ENCODE measurements at regions of chr2 and their contacts with region 1.

Region 1: GRCh38 chr2:71748227-71748626 is 294.9 kb downstream of the DYSF start:
- DNase-seq: peak; percentile 72 to 86
- H3K4me3 ChIP-seq: peak overlapping the region; percentile 25; the same call in 1 of the 2 replicates
- H3K27ac ChIP-seq: peak overlapping the region; percentile 93
- H3K4me1 ChIP-seq: peaks cover 84% of the 10 kb centered on the region
- H3K27me3 ChIP-seq: no peaks in the 10 kb centered on the region
- CTCF ChIP-seq: no peak

Region 2: GRCh38 chr2:71716781-71717624 is 31.2 kb before region 1 on chr2:
- CTCF ChIA-PET with region 1: no interaction called
- POLR2A ChIA-PET with region 1: no interaction called
- intact Hi-C with region 1: loop called (anchors 1 kb)
- DNase-seq: peak; percentile 71 to 95
- H3K4me3 ChIP-seq: no peak overlapping the region
- H3K27ac ChIP-seq: peak overlapping the region; percentile 33; the same call in 1 of the 2 replicates
- H3K4me1 ChIP-seq: peaks cover 62% of the 10 kb centered on the region
- H3K27me3 ChIP-seq: no peaks in the 10 kb centered on the region
- CTCF ChIP-seq: no peak

Region 3: DNA sequence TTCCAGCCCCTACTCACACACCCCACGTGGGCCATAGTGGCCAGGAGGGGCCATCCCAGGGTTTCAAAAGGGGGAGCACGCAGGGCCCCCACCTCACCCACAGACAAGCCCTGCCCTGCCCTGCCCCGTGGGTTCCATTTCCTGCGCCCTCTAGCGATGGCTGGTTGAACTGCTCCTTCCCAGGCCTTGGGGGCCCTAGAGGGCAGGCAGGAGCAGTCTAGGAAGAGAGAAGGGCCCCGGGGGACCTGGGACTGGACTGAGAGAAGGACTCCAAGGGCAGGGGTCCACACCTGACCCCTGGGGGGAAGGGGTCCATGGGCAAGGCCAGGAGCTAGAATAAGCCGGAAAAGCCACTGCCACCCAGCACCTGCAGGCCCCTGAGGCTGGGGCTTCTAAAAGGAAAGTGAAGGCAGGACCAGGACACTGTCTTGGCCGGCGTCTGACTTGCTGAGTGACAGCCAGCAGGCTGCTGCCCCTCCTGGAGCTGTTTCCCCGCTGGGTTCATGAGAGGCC is 389.3 kb after region 1 on chr2:
- CTCF ChIA-PET with region 1: no interaction called
- POLR2A ChIA-PET with region 1: no interaction called
- intact Hi-C with region 1: no loop called
- DNase-seq: peak in 1 of 2 experiments; percentile 69
- H3K4me3 ChIP-seq: peak overlapping the region; percentile 18; the same call in 1 of the 2 replicates
- H3K27ac ChIP-seq: peak overlapping the region; percentile 69
- H3K4me1 ChIP-seq: peaks cover 34% of the 10 kb centered on the region
- H3K27me3 ChIP-seq: no peaks in the 10 kb centered on the region
- CTCF ChIP-seq: peak; percentile 100

Measured in PC-9 (cell line).